H1 (cell line): ENCODE measurements at regions of chr14 and their contacts with region 1.

Region 1: DNA sequence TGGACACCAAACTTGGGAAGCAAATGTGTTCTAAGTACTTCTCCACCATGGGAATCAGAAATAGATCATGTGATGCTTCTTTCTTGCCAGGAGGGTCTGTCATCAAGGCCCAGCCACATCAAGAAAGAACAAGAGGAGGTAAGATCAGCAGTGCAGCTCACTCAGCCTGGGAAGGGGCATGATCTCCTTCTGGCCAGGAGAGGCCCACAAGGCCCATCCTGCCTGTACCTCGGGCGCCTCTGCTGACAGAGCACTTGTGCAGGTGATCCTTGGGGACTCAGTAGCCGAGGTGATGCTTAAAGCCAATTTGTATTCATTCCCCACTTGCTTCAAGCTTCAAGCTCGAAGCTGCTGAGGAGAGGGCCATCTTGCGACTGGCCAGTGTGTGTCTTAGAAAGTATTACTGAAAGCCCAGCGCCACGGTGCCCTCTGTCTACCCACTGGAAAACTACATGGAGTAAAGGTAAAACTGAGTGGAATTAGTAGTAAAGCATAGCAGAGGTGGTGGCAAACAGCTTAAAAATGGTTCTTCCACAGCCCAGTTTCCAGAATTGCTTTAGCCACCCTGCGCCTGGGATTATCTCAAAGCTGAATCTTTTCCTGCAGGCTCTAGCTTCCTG is 26.2 kb downstream of the RTRAF start:
- DNase-seq: peak in 1 of 2 experiments; percentile 61
- H3K4me3 ChIP-seq: no peak overlapping the region
- H3K27ac ChIP-seq: no peak overlapping the region
- H3K4me1 ChIP-seq: peaks cover 2 to 12% (median 11%) of the 10 kb centered on the region in 4 experiments; a peak in 6 of 7 replicates
- H3K27me3 ChIP-seq: no peaks in the 10 kb centered on the region
- CTCF ChIP-seq: peak; percentile 37 to 73 (median 55)
- EP300 ChIP-seq: no peak
- POLR2A ChIP-seq: no peak
- RAD21 ChIP-seq: peak; percentile 52 to 56

Region 2: GRCh38 chr14:51616724-51617409 is 398.7 kb before region 1 on chr14:
- CTCF ChIA-PET with region 1: no interaction called
- POLR2A ChIA-PET with region 1: no interaction called
- DNase-seq: no peak
- H3K4me3 ChIP-seq: no peak overlapping the region
- H3K27ac ChIP-seq: no peak overlapping the region
- H3K4me1 ChIP-seq: peaks cover 0 to 4% (median 1%) of the 10 kb centered on the region in 4 experiments; a peak in 1 of 7 replicates
- H3K27me3 ChIP-seq: no peaks in the 10 kb centered on the region
- CTCF ChIP-seq: no peak
- EP300 ChIP-seq: no peak
- POLR2A ChIP-seq: no peak
- RAD21 ChIP-seq: no peak

Region 3: GRCh38 chr14:51922624-51923023 is 92.9 kb before region 1 on chr14:
- CTCF ChIA-PET with region 1: no interaction called
- POLR2A ChIA-PET with region 1: no interaction called
- DNase-seq: no peak
- H3K4me3 ChIP-seq: no peak overlapping the region
- H3K27ac ChIP-seq: no peak overlapping the region
- H3K4me1 ChIP-seq: no peaks in the 10 kb centered on the region
- H3K27me3 ChIP-seq: no peaks in the 10 kb centered on the region
- CTCF ChIP-seq: no peak
- EP300 ChIP-seq: no peak
- POLR2A ChIP-seq: no peak
- RAD21 ChIP-seq: no peak

Region 4: GRCh38 chr14:51957950-51958349 is 57.6 kb before region 1 on chr14:
- CTCF ChIA-PET with region 1: no interaction called
- POLR2A ChIA-PET with region 1: no interaction called
- DNase-seq: no peak
- H3K4me3 ChIP-seq: no peak overlapping the region
- H3K27ac ChIP-seq: no peak overlapping the region
- H3K4me1 ChIP-seq: peaks cover 0 to 2% (median 0%) of the 10 kb centered on the region in 4 experiments; a peak in 1 of 7 replicates
- H3K27me3 ChIP-seq: no peaks in the 10 kb centered on the region
- CTCF ChIP-seq: no peak
- EP300 ChIP-seq: no peak
- POLR2A ChIP-seq: no peak
- RAD21 ChIP-seq: no peak

Region 5: GRCh38 chr14:51996148-51996746 is 19.3 kb before region 1 on chr14:
- CTCF ChIA-PET with region 1: interaction called, 19 read pairs
- POLR2A ChIA-PET with region 1: interaction called, 3 read pairs
- DNase-seq: no peak
- H3K4me3 ChIP-seq: no peak overlapping the region
- H3K27ac ChIP-seq: no peak overlapping the region
- H3K4me1 ChIP-seq: no peaks in the 10 kb centered on the region
- H3K27me3 ChIP-seq: no peaks in the 10 kb centered on the region
- CTCF ChIP-seq: peak in 2 of 3 experiments; percentile 21 to 48; a peak in 2 of 4 replicates
- EP300 ChIP-seq: no peak
- POLR2A ChIP-seq: no peak
- RAD21 ChIP-seq: peak; percentile 57 to 66

Region 6: GRCh38 chr14:52031781-52032180 is 16.3 kb after region 1 on chr14:
- CTCF ChIA-PET with region 1: interaction called, 25 read pairs
- POLR2A ChIA-PET with region 1: no interaction called
- DNase-seq: no peak
- H3K4me3 ChIP-seq: no peak overlapping the region
- H3K27ac ChIP-seq: no peak overlapping the region
- H3K4me1 ChIP-seq: no peaks in the 10 kb centered on the region; a peak in 1 of 7 replicates
- H3K27me3 ChIP-seq: no peaks in the 10 kb centered on the region
- CTCF ChIP-seq: no peak
- EP300 ChIP-seq: no peak
- POLR2A ChIP-seq: no peak
- RAD21 ChIP-seq: no peak

Region 7: DNA sequence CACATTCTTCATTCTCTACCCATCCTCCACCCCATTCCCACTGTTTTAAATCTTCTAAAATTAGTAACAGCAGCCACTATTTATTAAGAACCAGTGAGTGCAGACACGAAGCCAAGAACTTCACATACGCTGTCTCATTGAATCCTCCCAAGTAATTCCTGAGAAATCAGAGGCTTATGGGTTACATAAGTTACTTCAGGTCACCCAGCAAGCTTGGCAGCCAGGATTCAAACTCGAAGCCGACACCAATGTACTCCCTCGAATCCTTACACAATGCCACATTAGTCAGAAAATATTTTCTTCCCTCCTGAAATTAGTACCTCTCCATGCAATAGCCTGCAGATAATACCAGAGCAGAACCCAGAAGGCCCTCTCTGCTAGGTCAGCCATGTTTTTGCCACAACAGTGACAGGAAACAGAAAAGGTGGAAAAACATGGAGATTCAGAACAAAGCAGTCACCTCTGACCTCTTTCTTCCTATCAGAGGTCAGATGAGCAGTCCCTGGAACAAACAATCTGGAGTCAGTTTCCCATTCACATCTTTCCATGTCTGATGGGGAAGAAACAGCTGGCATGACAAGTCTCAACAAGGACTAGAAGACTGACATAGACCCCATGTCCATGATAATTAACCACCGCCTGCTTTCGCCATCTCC is 36.9 kb after region 1 on chr14:
- CTCF ChIA-PET with region 1: interaction called, 33 read pairs
- POLR2A ChIA-PET with region 1: no interaction called
- DNase-seq: no peak
- H3K4me3 ChIP-seq: no peak overlapping the region
- H3K27ac ChIP-seq: no peak overlapping the region
- H3K4me1 ChIP-seq: peaks cover 0 to 5% (median 1%) of the 10 kb centered on the region in 4 experiments; a peak in 3 of 7 replicates
- H3K27me3 ChIP-seq: no peaks in the 10 kb centered on the region
- CTCF ChIP-seq: no peak
- EP300 ChIP-seq: no peak
- POLR2A ChIP-seq: no peak
- RAD21 ChIP-seq: no peak

Region 8: DNA sequence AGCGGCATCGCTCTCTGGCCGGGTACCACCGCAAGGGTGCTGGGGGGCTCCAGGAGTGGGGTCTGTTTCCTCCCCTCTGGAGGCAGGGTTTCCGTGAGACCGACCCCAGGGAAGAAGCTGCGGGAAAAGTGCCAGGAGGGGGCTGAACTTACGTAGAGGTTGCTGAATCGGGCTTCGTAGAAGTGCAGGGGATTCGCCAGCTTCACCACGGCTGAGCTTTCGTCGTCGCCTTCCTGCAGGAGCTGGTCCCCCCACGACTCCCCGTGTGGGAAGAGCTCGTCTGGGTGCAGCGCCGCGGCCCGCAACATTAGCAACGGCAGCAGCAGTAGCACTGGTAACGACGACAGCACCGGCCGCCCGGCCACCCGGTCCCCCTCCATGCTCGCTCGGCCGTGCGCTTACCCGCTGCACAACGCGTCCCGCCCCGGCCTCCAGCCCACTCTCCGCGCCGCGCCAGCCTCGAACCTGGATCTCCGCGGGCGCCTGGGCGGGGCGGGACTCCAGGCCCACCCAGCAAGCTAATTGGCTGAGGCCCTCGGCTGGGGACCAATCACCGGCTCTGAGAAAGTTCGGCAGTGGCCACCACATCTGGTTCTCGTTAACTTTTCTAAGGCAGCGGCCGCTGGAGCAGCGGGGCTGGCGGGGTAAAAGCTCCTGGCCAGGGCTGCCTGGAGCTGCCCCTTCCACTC is 53.2 kb after region 1 on chr14 and contains the start of gene NID2:
- CTCF ChIA-PET with region 1: interaction called, 46 read pairs
- POLR2A ChIA-PET with region 1: interaction called, 4 read pairs
- DNase-seq: peak; percentile 63 to 92
- H3K4me3 ChIP-seq: peak within 1 kb of the TSS; percentile 47 to 84 (median 76)
- H3K27ac ChIP-seq: no peak within 1 kb of the TSS
- H3K4me1 ChIP-seq: peaks cover 0 to 6% (median under 1%) of the 10 kb centered on the region in 4 experiments; a peak in 2 of 7 replicates
- H3K27me3 ChIP-seq: peaks cover 5 to 35% (median 30%) of the 10 kb centered on the region in 4 experiments
- CTCF ChIP-seq: no peak
- EP300 ChIP-seq: no peak
- POLR2A ChIP-seq: no peak; a peak in 1 of 3 replicates
- RAD21 ChIP-seq: no peak
- total RNA-seq, gene NID2: 6.1 and 6.9 TPM in 2 replicates

Region 9: DNA sequence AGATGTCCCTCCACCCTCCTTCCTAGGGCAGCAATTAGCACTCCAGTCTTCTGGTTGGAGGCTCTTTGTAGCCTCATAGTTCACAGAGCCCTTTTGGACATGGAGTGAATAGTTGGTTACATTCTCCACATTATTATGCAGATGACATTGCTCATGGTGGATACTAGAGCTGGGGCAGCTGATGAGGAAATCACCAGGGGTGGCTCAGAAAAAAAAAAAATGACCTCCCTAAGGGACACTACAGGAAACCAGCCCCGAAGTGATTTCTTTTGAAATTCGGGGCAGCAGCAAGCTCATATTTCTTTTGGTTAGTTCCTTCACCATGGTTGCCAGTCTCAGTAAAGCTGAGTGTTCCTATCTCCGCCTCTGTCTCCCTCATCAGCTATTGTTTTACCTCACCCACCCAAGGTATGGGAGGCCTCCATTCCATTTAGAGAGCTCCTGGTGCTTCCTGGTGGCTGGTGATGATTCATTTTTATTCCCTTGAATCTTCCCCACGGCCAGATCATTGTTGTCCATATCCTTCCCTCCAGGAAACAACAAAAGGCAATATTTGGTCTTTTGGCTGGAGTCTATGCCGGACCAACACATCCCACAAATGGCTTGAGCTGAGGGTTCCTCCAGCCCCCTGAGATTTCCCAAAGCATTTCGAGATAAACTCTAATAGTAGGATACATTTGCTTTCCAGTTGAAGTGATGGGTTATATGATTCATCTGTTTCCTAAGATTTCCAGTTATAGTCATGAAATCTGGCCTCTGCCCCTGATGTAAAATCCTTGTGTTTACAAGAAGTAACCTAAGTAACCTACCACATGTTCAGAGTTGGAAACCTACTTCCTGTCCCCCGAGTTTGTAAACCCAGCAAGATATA is 109.5 kb after region 1 on chr14:
- CTCF ChIA-PET with region 1: interaction called, 10 read pairs
- POLR2A ChIA-PET with region 1: no interaction called
- DNase-seq: peak in 1 of 2 experiments; percentile 19
- H3K4me3 ChIP-seq: no peak overlapping the region
- H3K27ac ChIP-seq: no peak overlapping the region
- H3K4me1 ChIP-seq: peaks cover 0 to 9% (median 0%) of the 10 kb centered on the region in 4 experiments; a peak in 3 of 7 replicates
- H3K27me3 ChIP-seq: no peaks in the 10 kb centered on the region
- CTCF ChIP-seq: no peak
- EP300 ChIP-seq: no peak
- POLR2A ChIP-seq: no peak
- RAD21 ChIP-seq: no peak

Region 10: GRCh38 chr14:52131640-52132320 is 116.3 kb after region 1 on chr14:
- CTCF ChIA-PET with region 1: interaction called, 17 read pairs
- POLR2A ChIA-PET with region 1: interaction called, 3 read pairs
- DNase-seq: peak; percentile 62 to 84
- H3K4me3 ChIP-seq: no peak overlapping the region
- H3K27ac ChIP-seq: no peak overlapping the region
- H3K4me1 ChIP-seq: no peaks in the 10 kb centered on the region
- H3K27me3 ChIP-seq: no peaks in the 10 kb centered on the region
- CTCF ChIP-seq: peak; percentile 68 to 86 (median 85)
- EP300 ChIP-seq: no peak
- POLR2A ChIP-seq: no peak
- RAD21 ChIP-seq: peak; percentile 93 to 95

Region 11: GRCh38 chr14:52380294-52380693 is 364.8 kb after region 1 on chr14:
- CTCF ChIA-PET with region 1: no interaction called
- POLR2A ChIA-PET with region 1: no interaction called
- DNase-seq: no peak
- H3K4me3 ChIP-seq: no peak overlapping the region
- H3K27ac ChIP-seq: no peak overlapping the region
- H3K4me1 ChIP-seq: no peaks in the 10 kb centered on the region; a peak in 1 of 7 replicates
- H3K27me3 ChIP-seq: no peaks in the 10 kb centered on the region
- CTCF ChIP-seq: no peak
- EP300 ChIP-seq: no peak
- POLR2A ChIP-seq: no peak
- RAD21 ChIP-seq: no peak